GM23248 (cell line): ENCODE measurements at regions of chr11 and their contacts with region 1.

Region 1: GRCh38 chr11:9613118-9613829 is 39.8 kb downstream of the WEE1 start:
- DNase-seq: peak; percentile 95
- H3K4me3 ChIP-seq: peak overlapping the region; percentile 59
- H3K27ac ChIP-seq: peak overlapping the region; percentile 97
- H3K4me1 ChIP-seq: peaks cover 53% of the 10 kb centered on the region
- H3K27me3 ChIP-seq: no peaks in the 10 kb centered on the region

Region 2: DNA sequence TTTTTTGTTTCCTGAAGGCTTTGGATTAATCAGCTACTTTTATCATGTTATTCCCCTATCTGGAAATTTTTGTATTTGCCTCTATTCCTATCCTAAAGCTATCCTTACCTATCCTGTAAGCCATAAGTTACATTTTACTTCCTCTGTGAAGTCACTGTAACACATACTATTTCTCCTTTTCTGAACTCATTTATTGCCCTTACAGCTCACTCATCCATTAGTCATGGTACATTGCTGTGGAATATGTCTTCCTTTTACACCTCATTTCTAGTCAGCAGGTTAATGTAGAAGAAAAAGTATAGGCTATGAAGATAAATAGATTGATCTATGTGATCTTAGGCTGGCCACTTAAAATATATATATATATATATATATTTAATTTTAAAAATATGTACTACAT is 78.6 kb after region 1 on chr11:
- in situ Hi-C with region 1: loop called (anchors 10 kb)
- DNase-seq: peak; percentile 76
- H3K4me3 ChIP-seq: no peak overlapping the region
- H3K27ac ChIP-seq: peak overlapping the region; percentile 7; the same call in 1 of the 2 replicates
- H3K4me1 ChIP-seq: peaks cover 55% of the 10 kb centered on the region
- H3K27me3 ChIP-seq: no peaks in the 10 kb centered on the region

Region 3: GRCh38 chr11:10314199-10315072 is 701.2 kb after region 1 on chr11:
- in situ Hi-C with region 1: no loop called
- DNase-seq: peak; percentile 53
- H3K4me3 ChIP-seq: no peak overlapping the region
- H3K27ac ChIP-seq: no peak overlapping the region
- H3K4me1 ChIP-seq: peaks cover 11% of the 10 kb centered on the region; the same call in 1 of the 2 replicates
- H3K27me3 ChIP-seq: no peaks in the 10 kb centered on the region